Mammary epithelial cell (primary cell): ENCODE measurements at regions of chr16 and their contacts with region 1.

Region 1: DNA sequence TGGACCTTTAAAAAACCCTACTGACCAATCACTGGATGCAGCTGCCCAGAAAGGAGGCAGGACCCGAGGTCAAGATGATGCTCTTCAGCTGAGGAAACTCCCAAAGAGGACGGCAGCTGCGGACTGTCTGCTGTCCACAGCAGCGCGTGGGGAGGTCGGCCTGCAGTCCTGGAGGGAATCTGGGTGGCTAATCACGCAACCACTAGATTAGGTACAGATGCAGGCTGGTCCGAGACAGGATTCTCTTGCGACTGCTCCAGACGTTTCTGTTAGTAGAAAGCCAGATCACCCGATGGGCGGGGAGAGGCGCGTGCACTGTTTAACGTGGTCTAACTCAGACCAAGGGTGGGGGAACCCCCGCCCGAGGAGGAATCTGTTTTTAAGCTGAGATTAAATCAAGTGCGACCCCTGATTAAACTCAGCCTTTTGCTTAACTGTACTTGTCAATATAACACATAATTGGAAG is 8.8 kb downstream of the CTRB2 start:
- DNase-seq: no peak
- H3K4me3 ChIP-seq: no peak overlapping the region
- H3K27ac ChIP-seq: no peak overlapping the region
- H3K4me1 ChIP-seq: no peaks in the 10 kb centered on the region
- H3K27me3 ChIP-seq: no peaks in the 10 kb centered on the region
- CTCF ChIP-seq: no peak

Region 2: GRCh38 chr16:74998481-74999218 is 199.5 kb before region 1 on chr16 and contains the start of gene ZNRF1:
- CTCF ChIA-PET with region 1: no interaction called
- dilution Hi-C with region 1: no loop called
- in situ Hi-C with region 1: no loop called
- intact Hi-C with region 1: loop called (anchors 1 kb)
- DNase-seq: peak; percentile 78
- H3K4me3 ChIP-seq: peak within 1 kb of the TSS; percentile 52 to 77 (median 64)
- H3K27ac ChIP-seq: peak within 1 kb of the TSS; percentile 56
- H3K4me1 ChIP-seq: peaks cover 18% of the 10 kb centered on the region
- H3K27me3 ChIP-seq: no peaks in the 10 kb centered on the region
- CTCF ChIP-seq: peak; percentile 47 to 77
- total RNA-seq, gene ZNRF1: 12.8 to 32.0 TPM

Region 3: DNA sequence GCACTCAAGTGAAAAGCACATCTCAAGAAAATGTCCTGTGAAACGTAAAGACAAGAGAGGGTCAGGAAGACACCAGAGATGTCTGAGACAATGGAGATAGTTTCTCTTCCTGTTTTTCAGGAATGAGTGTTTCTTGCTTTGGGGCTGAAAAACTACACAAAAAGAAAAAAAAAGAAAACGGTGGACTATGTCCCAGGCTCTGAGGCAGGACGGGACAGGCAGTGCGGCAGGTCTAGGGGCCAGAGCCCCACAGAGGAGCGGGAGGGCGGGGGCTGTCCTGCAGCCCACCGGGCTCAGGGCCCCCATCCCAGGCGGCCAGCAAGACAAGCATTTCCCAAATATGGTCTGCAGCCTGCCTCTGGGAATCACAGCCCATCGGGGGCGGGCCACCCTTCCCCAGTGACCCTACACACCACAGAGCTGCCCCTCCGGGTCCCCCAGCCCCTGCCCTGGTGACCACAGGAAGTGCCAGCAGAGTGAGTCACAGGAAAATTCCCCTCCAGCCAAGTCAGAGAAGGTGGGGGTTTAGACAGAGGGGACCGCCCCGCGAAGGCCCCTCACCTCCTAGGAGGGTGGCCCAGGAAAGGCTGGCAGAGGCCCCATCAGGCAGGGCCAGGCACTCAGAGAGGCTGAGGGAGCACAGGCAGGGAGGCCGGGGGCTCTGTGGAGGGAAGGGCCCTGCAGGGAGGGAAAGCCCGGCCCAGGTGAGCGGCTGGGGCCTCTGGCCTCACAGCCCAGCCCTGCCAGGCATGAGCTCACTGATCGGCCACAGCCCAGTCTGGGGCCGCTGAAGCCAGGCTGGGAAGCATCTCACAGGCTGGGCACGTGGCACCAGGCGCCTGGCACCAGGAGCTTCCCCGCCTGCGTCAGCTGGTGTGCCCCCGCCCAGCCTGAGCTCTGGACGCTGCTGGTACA is 46.9 kb after region 1 on chr16:
- CTCF ChIA-PET with region 1: no interaction called
- dilution Hi-C with region 1: loop called (anchors 5 kb)
- in situ Hi-C with region 1: no loop called
- intact Hi-C with region 1: no loop called
- DNase-seq: peak; percentile 94
- H3K4me3 ChIP-seq: peak overlapping the region in 1 of 3 experiments; percentile 11
- H3K27ac ChIP-seq: peak overlapping the region; percentile 88
- H3K4me1 ChIP-seq: peaks cover 84% of the 10 kb centered on the region
- H3K27me3 ChIP-seq: no peaks in the 10 kb centered on the region
- CTCF ChIP-seq: no peak

Region 4: GRCh38 chr16:75402821-75403475 is 204.8 kb after region 1 on chr16:
- CTCF ChIA-PET with region 1: no interaction called
- dilution Hi-C with region 1: no loop called
- in situ Hi-C with region 1: loop called (anchors 10 kb)
- intact Hi-C with region 1: loop called (anchors 1 kb)
- DNase-seq: peak; percentile 14
- H3K4me3 ChIP-seq: no peak overlapping the region
- H3K27ac ChIP-seq: no peak overlapping the region
- H3K4me1 ChIP-seq: peaks cover 2% of the 10 kb centered on the region
- H3K27me3 ChIP-seq: no peaks in the 10 kb centered on the region
- CTCF ChIP-seq: peak; percentile 59 to 62

Region 5: GRCh38 chr16:75432828-75433731 is 234.9 kb after region 1 on chr16 and contains the start of gene CFDP1:
- CTCF ChIA-PET with region 1: no interaction called
- dilution Hi-C with region 1: no loop called
- in situ Hi-C with region 1: no loop called
- intact Hi-C with region 1: no loop called
- DNase-seq: peak; percentile 90
- H3K4me3 ChIP-seq: peak within 1 kb of the TSS; percentile 89 to 98 (median 89)
- H3K27ac ChIP-seq: peak within 1 kb of the TSS; percentile 96
- H3K4me1 ChIP-seq: peaks cover 7% of the 10 kb centered on the region
- H3K27me3 ChIP-seq: no peaks in the 10 kb centered on the region
- CTCF ChIP-seq: no peak
- total RNA-seq, gene CFDP1: 18.0 to 35.9 TPM

Region 6: GRCh38 chr16:75550211-75550662 is 352.1 kb after region 1 on chr16:
- CTCF ChIA-PET with region 1: interaction called, 3 read pairs
- dilution Hi-C with region 1: no loop called
- in situ Hi-C with region 1: no loop called
- intact Hi-C with region 1: loop called (anchors 1 kb)
- DNase-seq: peak; percentile 88
- H3K4me3 ChIP-seq: peak overlapping the region; percentile 10 to 38 (median 37)
- H3K27ac ChIP-seq: peak overlapping the region; percentile 52
- H3K4me1 ChIP-seq: peaks cover 6% of the 10 kb centered on the region
- H3K27me3 ChIP-seq: no peaks in the 10 kb centered on the region
- CTCF ChIP-seq: peak; percentile 85 to 96

Region 7: GRCh38 chr16:75758215-75758614 is 560.0 kb after region 1 on chr16:
- CTCF ChIA-PET with region 1: no interaction called
- dilution Hi-C with region 1: no loop called
- in situ Hi-C with region 1: loop called (anchors 10 to 25 kb)
- intact Hi-C with region 1: no loop called
- DNase-seq: no peak
- H3K4me3 ChIP-seq: no peak overlapping the region
- H3K27ac ChIP-seq: no peak overlapping the region
- H3K4me1 ChIP-seq: no peaks in the 10 kb centered on the region
- H3K27me3 ChIP-seq: no peaks in the 10 kb centered on the region
- CTCF ChIP-seq: no peak